MCF 10A (cell line): ENCODE measurements at regions of chr5 and their contacts with region 1.

Region 1: GRCh38 chr5:97534166-97534565 is 351.1 kb upstream of the RIOK2 start:
- DNase-seq: peak; percentile 87
- H3K4me3 Mint-ChIP-seq: no peak overlapping the region
- H3K27ac Mint-ChIP-seq: peak overlapping the region; percentile 4
- H3K4me1 Mint-ChIP-seq: peaks cover 17% of the 10 kb centered on the region
- H3K27me3 Mint-ChIP-seq: no peaks in the 10 kb centered on the region
- CTCF ChIP-seq: peak; percentile 72

Region 2: GRCh38 chr5:97044052-97044451 is 490.1 kb before region 1 on chr5:
- CTCF ChIA-PET with region 1: no interaction called
- POLR2A ChIA-PET with region 1: no interaction called
- intact Hi-C with region 1: no loop called
- DNase-seq: peak; percentile 51
- H3K4me3 Mint-ChIP-seq: no peak overlapping the region
- H3K27ac Mint-ChIP-seq: no peak overlapping the region
- H3K4me1 Mint-ChIP-seq: no peaks in the 10 kb centered on the region
- H3K27me3 Mint-ChIP-seq: peaks cover 14% of the 10 kb centered on the region
- CTCF ChIP-seq: peak; percentile 31

Region 3: GRCh38 chr5:97183100-97183929 is 350.9 kb before region 1 on chr5 and contains the start of gene RIOK2:
- CTCF ChIA-PET with region 1: interaction called, 3 read pairs
- POLR2A ChIA-PET with region 1: interaction called, 3 read pairs
- intact Hi-C with region 1: loop called (anchors 1 kb)
- DNase-seq: peak; percentile 97
- H3K4me3 Mint-ChIP-seq: peak within 1 kb of the TSS; percentile 77
- H3K27ac Mint-ChIP-seq: peak within 1 kb of the TSS; percentile 100
- H3K4me1 Mint-ChIP-seq: peaks cover 35% of the 10 kb centered on the region
- H3K27me3 Mint-ChIP-seq: no peaks in the 10 kb centered on the region
- CTCF ChIP-seq: no peak
- total RNA-seq, gene RIOK2: 45.7 and 50.9 TPM in 2 replicates

Region 4: GRCh38 chr5:97297063-97297703 is 237.0 kb before region 1 on chr5:
- CTCF ChIA-PET with region 1: interaction called, 18 read pairs
- POLR2A ChIA-PET with region 1: no interaction called
- intact Hi-C with region 1: loop called (anchors 5 kb)
- DNase-seq: peak; percentile 56
- H3K4me3 Mint-ChIP-seq: no peak overlapping the region
- H3K27ac Mint-ChIP-seq: no peak overlapping the region
- H3K4me1 Mint-ChIP-seq: no peaks in the 10 kb centered on the region
- H3K27me3 Mint-ChIP-seq: no peaks in the 10 kb centered on the region
- CTCF ChIP-seq: peak; percentile 26

Region 5: GRCh38 chr5:97499605-97500004 is 34.6 kb before region 1 on chr5:
- CTCF ChIA-PET with region 1: interaction called, 10 read pairs
- POLR2A ChIA-PET with region 1: no interaction called
- intact Hi-C with region 1: no loop called
- DNase-seq: no peak
- H3K4me3 Mint-ChIP-seq: no peak overlapping the region
- H3K27ac Mint-ChIP-seq: no peak overlapping the region
- H3K4me1 Mint-ChIP-seq: peaks cover 8% of the 10 kb centered on the region
- H3K27me3 Mint-ChIP-seq: no peaks in the 10 kb centered on the region
- CTCF ChIP-seq: no peak

Region 6: GRCh38 chr5:97559827-97560598 is 25.8 kb after region 1 on chr5:
- CTCF ChIA-PET with region 1: interaction called, 18 read pairs
- POLR2A ChIA-PET with region 1: no interaction called
- intact Hi-C with region 1: no loop called
- DNase-seq: peak; percentile 19
- H3K4me3 Mint-ChIP-seq: no peak overlapping the region
- H3K27ac Mint-ChIP-seq: peak overlapping the region; percentile 69
- H3K4me1 Mint-ChIP-seq: peaks cover 20% of the 10 kb centered on the region
- H3K27me3 Mint-ChIP-seq: no peaks in the 10 kb centered on the region
- CTCF ChIP-seq: no peak

Region 7: GRCh38 chr5:98349251-98349995 is 815.3 kb after region 1 on chr5:
- CTCF ChIA-PET with region 1: no interaction called
- POLR2A ChIA-PET with region 1: no interaction called
- intact Hi-C with region 1: loop called (anchors 5 kb)
- DNase-seq: no peak
- H3K4me3 Mint-ChIP-seq: no peak overlapping the region
- H3K27ac Mint-ChIP-seq: no peak overlapping the region
- H3K4me1 Mint-ChIP-seq: no peaks in the 10 kb centered on the region
- H3K27me3 Mint-ChIP-seq: no peaks in the 10 kb centered on the region
- CTCF ChIP-seq: peak; percentile 48